ENCODE measurements at regions of chr2 and their contacts with region 1.

Region 1: DNA sequence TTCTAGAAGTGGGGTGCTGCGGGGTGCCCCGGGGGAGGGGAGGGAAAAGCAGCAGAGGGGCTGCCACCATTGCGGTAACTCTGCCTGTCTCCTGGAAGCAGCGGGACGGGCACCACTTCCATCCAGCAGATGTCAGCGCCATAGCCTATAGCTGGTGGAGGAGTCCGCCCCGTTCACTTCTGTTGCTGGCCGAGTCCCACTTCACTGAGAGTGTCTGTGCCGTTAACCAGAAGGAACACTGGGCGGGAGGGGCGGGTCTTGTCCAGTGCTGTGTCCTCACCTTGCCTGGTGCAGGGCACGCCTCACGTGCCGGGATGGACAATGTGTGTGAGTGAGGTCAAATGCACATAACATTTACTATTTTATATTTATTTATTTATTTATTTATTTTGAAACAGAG is 19.3 kb upstream of the ODC1 start:
- DNase-seq: no peak
- ATAC-seq: no peak

Region 2: DNA sequence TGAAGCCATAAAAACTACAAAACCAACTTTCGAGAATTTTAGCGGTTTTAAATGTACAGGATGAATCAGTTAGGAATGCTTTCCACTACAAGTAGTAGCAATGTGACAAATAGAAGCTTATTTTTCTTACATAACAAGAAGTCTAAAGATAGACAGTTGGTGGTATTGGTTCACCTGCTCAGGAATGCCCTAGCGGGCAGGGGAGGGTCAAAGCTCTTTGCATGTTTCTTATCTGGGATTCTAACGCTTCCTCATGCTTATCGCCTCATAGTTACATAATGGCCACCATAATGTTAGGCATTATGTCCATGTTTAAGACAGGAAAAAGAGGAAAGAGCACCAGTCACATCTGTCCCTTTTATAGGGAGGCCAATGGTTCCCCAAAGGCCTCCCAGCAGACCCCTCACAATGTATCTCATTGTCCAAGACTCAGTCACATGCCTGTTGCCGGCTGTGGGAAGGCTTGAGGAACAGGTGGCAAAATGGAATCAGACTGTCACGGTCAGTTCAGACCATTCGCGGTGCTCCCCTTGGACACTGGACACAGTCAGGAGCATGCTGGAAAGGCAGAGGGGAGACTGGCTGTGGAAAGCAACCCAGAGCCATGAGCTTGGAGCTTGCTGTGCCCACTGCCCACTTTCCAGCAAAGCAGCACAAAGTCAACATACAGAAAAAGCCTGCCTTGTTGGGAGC is 50.1 kb after region 1 on chr2:
- intact Hi-C with region 1: loop called (anchors 2 kb)
- DNase-seq: peak; percentile 31
- ATAC-seq: no peak

Measured in sciatic nerve (tissue), 2 donors.